H1 (cell line): ENCODE measurements at regions of chr15 and their contacts with region 1.

Region 1: DNA sequence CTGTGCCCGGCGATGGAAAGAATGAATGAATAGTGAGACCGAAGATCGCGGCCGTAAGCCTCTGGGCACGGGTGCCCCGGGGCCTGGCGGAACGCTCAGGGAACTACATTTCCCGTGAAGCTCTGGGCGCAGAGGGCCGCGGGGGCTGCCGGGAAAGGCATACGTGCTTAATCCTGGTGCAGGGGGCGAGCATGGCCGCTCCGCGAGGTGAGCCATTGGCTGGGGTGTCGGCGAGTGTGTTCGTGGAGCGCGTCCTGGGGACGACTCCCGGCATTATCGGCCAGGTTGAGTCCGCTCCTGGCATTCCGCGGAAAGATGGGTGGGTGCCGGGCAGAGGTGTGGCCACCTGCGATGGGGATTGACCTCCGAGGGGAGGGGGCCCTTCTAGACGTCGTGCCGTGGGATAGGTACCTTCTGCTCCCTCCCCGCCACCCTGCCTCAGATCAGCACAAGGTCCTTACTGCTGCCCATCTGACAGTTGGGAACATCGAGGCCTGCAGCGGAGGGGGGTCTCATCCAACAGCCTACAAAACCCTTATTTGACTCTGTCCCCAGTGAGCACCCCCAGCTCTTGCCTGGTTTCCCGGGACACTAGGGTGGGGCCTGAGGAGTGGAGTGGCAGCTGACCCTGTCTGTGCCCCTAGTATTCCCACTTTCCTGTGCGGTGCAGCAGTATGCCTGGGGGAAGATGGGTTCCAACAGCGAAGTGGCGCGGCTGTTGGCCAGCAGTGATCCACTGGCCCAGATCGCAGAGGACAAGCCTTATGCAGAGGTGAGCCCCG is at the start of gene MPI:
- DNase-seq: peak in 1 of 2 experiments; percentile 93
- H3K4me3 ChIP-seq: peak within 1 kb of the TSS; percentile 80 to 96 (median 88)
- H3K27ac ChIP-seq: peak within 1 kb of the TSS; percentile 90
- H3K4me1 ChIP-seq: peaks cover 0 to 4% (median 2%) of the 10 kb centered on the region in 4 experiments; a peak in 4 of 7 replicates
- H3K27me3 ChIP-seq: no peaks in the 10 kb centered on the region
- CTCF ChIP-seq: no peak
- EP300 ChIP-seq: peak in 1 of 2 experiments; percentile 17; a peak in 1 of 3 replicates
- POLR2A ChIP-seq: peak; percentile 92 to 97
- RAD21 ChIP-seq: no peak
- total RNA-seq, gene MPI: 31.0 and 32.9 TPM in 2 replicates

Region 2: GRCh38 chr15:74674119-74674518 is 216.0 kb before region 1 on chr15:
- CTCF ChIA-PET with region 1: no interaction called
- POLR2A ChIA-PET with region 1: no interaction called
- DNase-seq: no peak
- H3K4me3 ChIP-seq: no peak overlapping the region
- H3K27ac ChIP-seq: no peak overlapping the region
- H3K4me1 ChIP-seq: no peaks in the 10 kb centered on the region
- H3K27me3 ChIP-seq: no peaks in the 10 kb centered on the region
- CTCF ChIP-seq: no peak
- EP300 ChIP-seq: no peak
- POLR2A ChIP-seq: no peak
- RAD21 ChIP-seq: no peak

Region 3: GRCh38 chr15:74873036-74873755 is 16.9 kb before region 1 on chr15 and contains the start of gene SCAMP2:
- CTCF ChIA-PET with region 1: interaction called, 3 read pairs
- POLR2A ChIA-PET with region 1: interaction called, 12 read pairs
- DNase-seq: peak; percentile 84 to 96
- H3K4me3 ChIP-seq: peak within 1 kb of the TSS; percentile 80 to 98 (median 93)
- H3K27ac ChIP-seq: peak within 1 kb of the TSS; percentile 92; the same call in 1 of the 2 replicates
- H3K4me1 ChIP-seq: peaks cover 0 to 3% (median 0%) of the 10 kb centered on the region in 4 experiments; a peak in 1 of 7 replicates
- H3K27me3 ChIP-seq: no peaks in the 10 kb centered on the region
- CTCF ChIP-seq: no peak
- EP300 ChIP-seq: no peak
- POLR2A ChIP-seq: peak; percentile 81 to 92
- RAD21 ChIP-seq: no peak
- total RNA-seq, gene SCAMP2: 40.3 and 41.7 TPM in 2 replicates